Activated CD4-positive, alpha-beta T cell treated with anti-CD3 and anti-CD28 coated beads for 36 hours (primary cell): ENCODE measurements at regions of chr15 and their contacts with region 1.

Region 1: DNA sequence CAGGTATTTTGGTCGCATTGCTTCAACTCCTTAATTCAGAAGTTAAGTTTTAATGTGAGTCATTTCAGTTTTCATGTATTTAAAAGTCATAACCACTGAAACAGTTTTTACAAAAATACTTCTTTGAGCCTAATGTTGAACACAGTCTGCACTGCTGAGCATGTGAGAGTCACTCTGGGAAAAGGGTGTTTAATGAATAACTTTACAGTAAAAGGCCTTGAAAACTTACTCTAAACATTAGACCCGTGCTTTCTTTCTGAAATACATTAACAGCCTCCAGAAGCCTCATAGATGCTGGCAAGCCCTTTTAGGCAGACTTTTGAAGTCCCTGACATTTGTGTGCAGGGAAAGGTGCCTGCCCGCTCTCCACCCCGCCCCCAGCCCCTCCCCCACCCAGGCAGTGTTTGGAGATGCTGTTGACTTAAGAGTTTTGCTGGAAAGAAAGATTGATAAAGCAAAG is 68.9 kb upstream of the NR2F2 start:
- DNase-seq: no peak
- ATAC-seq: no peak
- H3K4me3 Mint-ChIP-seq: no peak overlapping the region
- H3K27ac Mint-ChIP-seq: no peak overlapping the region
- H3K4me1 Mint-ChIP-seq: no peaks in the 10 kb centered on the region
- H3K27me3 Mint-ChIP-seq: peaks cover 8% of the 10 kb centered on the region

Region 2: GRCh38 chr15:95558131-95558530 is 703.5 kb before region 1 on chr15:
- CTCF ChIA-PET with region 1: no interaction called
- POLR2A ChIA-PET with region 1: interaction called, 16 read pairs
- intact Hi-C with region 1: no loop called
- DNase-seq: no peak
- ATAC-seq: no peak
- H3K4me3 Mint-ChIP-seq: no peak overlapping the region
- H3K27ac Mint-ChIP-seq: no peak overlapping the region
- H3K4me1 Mint-ChIP-seq: peaks cover 12% of the 10 kb centered on the region
- H3K27me3 Mint-ChIP-seq: peaks cover 21% of the 10 kb centered on the region

Region 3: DNA sequence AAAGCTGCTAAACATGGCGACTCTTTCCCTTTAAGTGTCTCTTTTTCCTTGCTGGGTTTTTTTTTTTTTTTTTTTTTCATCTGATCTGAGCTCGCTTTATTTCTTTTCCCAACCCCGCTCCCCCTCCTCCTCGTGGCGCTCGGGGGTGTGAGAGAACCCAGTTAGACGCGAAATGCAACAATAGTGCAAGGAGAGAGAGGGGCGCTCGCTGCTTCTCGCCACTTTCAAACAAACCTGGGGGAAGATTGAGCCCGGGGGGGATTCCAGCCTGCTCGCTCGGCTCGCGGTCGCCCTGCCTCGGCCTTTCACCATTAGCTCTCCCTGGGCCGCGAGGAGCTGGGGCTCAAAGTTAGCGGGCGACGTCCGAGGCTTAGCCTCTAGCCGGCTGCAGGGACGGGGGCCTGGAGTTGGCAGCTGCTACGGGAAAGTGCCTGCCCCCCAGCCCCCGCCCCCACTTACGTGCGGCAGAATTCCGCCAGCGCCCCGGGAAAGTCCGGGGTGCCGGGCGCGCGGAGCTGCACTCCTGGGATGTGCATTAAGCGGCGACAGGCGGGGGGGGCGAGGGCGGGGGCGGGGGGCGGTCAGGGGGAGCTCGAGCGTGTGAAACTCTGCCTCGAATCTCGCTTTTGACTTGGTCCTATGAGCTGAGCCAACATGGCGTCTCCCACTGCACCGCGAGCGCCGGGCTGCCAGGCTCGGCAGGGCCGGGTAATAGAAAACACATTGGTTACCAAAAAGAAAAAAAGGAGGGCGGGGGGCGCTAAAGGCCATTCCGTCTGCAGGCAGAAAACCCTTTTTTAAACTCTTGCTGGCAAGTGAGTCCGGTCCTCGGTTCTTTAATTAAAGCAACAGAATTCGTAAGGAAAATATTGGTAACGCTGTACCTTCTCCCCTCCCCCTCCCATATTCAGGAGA is 79.2 kb after region 1 on chr15:
- CTCF ChIA-PET with region 1: no interaction called
- POLR2A ChIA-PET with region 1: no interaction called
- intact Hi-C with region 1: no loop called
- DNase-seq: no peak
- ATAC-seq: no peak
- H3K4me3 Mint-ChIP-seq: no peak overlapping the region
- H3K27ac Mint-ChIP-seq: no peak overlapping the region
- H3K4me1 Mint-ChIP-seq: peaks cover 3% of the 10 kb centered on the region
- H3K27me3 Mint-ChIP-seq: peaks cover 78% of the 10 kb centered on the region